ENCODE measurements at regions of chr16 and their contacts with region 1.

Region 1: GRCh38 chr16:70380861-70381603 is 34.3 kb downstream of the DDX19A start:
- DNase-seq: peak; percentile 96
- H3K4me3 Mint-ChIP-seq: peak overlapping the region; percentile 99
- H3K27ac Mint-ChIP-seq: peak overlapping the region; percentile 99
- H3K4me1 Mint-ChIP-seq: peaks cover 5% of the 10 kb centered on the region
- H3K27me3 Mint-ChIP-seq: no peaks in the 10 kb centered on the region

Region 2: DNA sequence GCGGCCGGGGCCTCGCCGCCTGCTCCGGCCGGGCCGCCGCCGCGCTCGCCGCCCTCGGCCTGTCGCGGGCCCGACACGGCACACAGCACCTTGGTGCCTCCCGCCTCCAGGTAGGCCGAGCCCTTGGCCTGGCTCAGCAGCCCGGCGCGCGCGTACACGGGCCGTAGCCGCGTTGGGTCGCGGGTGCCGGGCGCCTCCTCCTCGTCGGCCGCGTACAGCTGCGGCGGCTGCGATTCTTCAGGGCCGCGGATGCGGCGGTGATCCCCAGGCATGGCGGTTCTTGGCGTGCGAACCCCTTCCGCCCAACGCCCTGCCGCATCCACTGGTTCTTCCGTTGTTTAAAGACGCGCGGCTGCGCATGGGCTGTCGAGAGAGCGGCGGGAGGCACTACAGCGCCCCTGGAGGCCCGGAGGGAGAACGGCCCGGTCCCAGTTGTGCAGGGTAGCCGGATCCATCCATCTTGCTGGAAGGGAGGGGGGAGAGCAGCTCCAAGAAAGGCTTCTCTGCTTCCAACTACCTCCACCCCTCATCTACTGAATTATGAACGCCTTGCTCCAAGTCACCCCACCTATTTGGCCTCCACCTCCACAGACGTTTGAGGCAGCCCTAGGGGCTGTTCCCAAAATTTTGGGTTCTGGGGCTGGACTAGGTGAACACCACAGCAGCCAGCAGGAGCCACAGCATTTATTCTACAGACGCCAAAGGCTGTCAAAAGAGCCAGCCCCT is 129.2 kb before region 1 on chr16 and contains the start of gene EXOSC6:
- intact Hi-C with region 1: loop called (anchors 2 kb)
- DNase-seq: peak; percentile 90
- H3K4me3 Mint-ChIP-seq: peak within 1 kb of the TSS; percentile 91
- H3K27ac Mint-ChIP-seq: peak within 1 kb of the TSS; percentile 96
- H3K4me1 Mint-ChIP-seq: peaks cover 10% of the 10 kb centered on the region
- H3K27me3 Mint-ChIP-seq: no peaks in the 10 kb centered on the region
- total RNA-seq, gene EXOSC6: 40.5 and 42.1 TPM in 2 replicates

Region 3: GRCh38 chr16:70342016-70342415 is 39.0 kb before region 1 on chr16:
- intact Hi-C with region 1: loop called (anchors 1 kb)
- DNase-seq: no peak
- H3K4me3 Mint-ChIP-seq: no peak overlapping the region
- H3K27ac Mint-ChIP-seq: no peak overlapping the region
- H3K4me1 Mint-ChIP-seq: peaks cover 5% of the 10 kb centered on the region
- H3K27me3 Mint-ChIP-seq: no peaks in the 10 kb centered on the region

Region 4: GRCh38 chr16:70428178-70428998 is 47.4 kb after region 1 on chr16:
- intact Hi-C with region 1: loop called (anchors 2 kb)
- DNase-seq: peak; percentile 57
- H3K4me3 Mint-ChIP-seq: peak overlapping the region; percentile 46
- H3K27ac Mint-ChIP-seq: peak overlapping the region; percentile 86
- H3K4me1 Mint-ChIP-seq: peaks cover 51% of the 10 kb centered on the region
- H3K27me3 Mint-ChIP-seq: no peaks in the 10 kb centered on the region

Region 5: GRCh38 chr16:70454222-70455034 is 73.4 kb after region 1 on chr16 and contains the start of gene FCSK:
- intact Hi-C with region 1: loop called (anchors 1 kb)
- DNase-seq: peak; percentile 52
- H3K4me3 Mint-ChIP-seq: peak within 1 kb of the TSS; percentile 91
- H3K27ac Mint-ChIP-seq: peak within 1 kb of the TSS; percentile 83
- H3K4me1 Mint-ChIP-seq: peaks cover 21% of the 10 kb centered on the region
- H3K27me3 Mint-ChIP-seq: no peaks in the 10 kb centered on the region
- total RNA-seq, gene FCSK: 19.7 and 21.0 TPM in 2 replicates

Region 6: DNA sequence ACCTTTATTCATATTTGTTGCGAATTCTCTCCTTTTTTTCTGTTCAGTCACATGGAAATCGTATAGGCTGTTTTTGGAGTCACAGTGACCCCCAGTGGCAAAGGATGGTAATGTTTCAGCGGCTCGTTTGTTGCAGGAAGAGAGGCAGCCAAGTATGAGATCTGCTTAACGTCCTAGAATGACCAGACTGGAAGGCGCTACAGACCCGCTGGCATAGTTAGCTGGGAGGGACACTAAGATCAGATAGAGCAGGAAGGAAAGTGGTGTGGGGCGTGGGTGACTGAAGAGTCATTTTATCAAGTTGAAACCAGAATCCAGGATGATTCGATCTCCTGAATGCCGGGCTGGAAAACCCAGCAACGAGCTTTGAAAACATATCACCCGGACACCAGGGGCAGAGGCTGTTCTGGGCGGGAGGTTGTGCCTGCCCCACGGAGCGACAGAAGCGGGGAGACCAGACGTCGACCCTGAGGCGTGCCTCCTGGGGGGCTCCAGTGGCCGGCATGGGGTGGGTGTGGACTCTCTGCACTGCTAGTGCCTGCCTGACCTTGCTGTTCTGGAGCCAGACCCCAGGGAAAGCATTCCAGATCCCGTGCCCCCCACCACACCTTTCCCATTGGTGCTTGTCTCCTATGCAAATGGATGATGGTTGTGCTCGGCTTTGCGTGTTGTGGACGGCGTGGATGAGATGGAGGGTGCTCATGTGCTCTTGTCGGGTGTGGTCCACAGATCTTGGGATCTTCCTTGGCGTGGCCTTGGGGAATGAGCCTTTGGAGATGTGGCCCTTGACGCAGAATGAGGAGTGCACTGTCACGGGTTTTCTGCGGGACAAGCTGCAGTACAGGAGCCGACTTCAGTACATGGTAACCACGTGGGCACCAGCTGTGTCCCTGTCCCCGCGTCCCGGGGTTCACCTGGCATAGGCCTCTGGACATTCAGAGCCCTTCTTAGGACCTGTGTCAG is 273.1 kb after region 1 on chr16:
- intact Hi-C with region 1: loop called (anchors 2 kb)
- DNase-seq: peak; percentile 72
- H3K4me3 Mint-ChIP-seq: peak overlapping the region; percentile 35
- H3K27ac Mint-ChIP-seq: peak overlapping the region; percentile 16
- H3K4me1 Mint-ChIP-seq: peaks cover 5% of the 10 kb centered on the region
- H3K27me3 Mint-ChIP-seq: peaks cover 5% of the 10 kb centered on the region